ENCODE measurements at regions of chr2 and their contacts with region 1.

Region 1: GRCh38 chr2:120312861-120313694 is 32.9 kb upstream of the INHBB start:
- DNase-seq: peak; percentile 74
- H3K4me3 ChIP-seq: peak overlapping the region; percentile 41 to 45 (median 42)
- H3K27ac ChIP-seq: no peak overlapping the region
- H3K4me1 ChIP-seq: peaks cover 4% of the 10 kb centered on the region
- H3K27me3 ChIP-seq: no peaks in the 10 kb centered on the region
- CTCF ChIP-seq: peak; percentile 79 to 93

Region 2: DNA sequence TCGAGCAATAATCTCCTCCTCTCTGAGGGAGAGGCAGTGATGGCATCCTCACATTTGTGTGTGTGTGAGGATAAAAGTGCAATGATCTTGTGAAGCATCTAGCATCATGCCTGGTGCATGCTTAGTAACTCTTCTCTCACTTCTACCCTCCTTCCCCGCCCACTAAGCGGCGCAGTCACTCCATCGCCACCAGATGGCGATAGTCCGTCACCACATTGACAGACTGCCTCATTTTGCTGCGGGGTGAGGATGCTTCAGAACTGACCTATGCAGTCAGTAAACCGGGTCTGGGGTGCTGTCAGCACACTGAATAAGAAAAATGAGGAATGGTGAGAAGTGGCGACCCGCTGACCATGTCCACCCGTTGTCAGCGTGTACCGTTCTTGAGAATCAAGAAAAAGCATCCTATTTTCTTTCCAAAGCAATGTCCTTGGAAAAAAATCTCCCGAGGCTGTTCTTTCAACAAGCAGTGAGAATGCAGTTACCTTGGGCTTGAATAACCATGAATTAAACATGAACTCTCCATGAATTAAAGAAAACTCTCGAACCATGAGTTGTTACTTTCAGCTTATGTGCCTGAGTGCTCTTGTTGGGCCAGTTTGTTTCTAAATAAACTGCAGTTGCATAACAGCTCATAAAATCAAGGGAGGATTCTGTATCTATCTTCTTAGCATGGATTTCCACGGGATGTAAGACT is 671.4 kb before region 1 on chr2:
- CTCF ChIA-PET with region 1: interaction called, 5 read pairs
- dilution Hi-C with region 1: no loop called
- in situ Hi-C with region 1: no loop called
- intact Hi-C with region 1: loop called (anchors 5 kb)
- DNase-seq: peak; percentile 67
- H3K4me3 ChIP-seq: no peak overlapping the region
- H3K27ac ChIP-seq: no peak overlapping the region
- H3K4me1 ChIP-seq: no peaks in the 10 kb centered on the region
- H3K27me3 ChIP-seq: peaks cover 2% of the 10 kb centered on the region
- CTCF ChIP-seq: peak; percentile 98

Region 3: GRCh38 chr2:120109186-120110061 is 203.7 kb before region 1 on chr2:
- CTCF ChIA-PET with region 1: interaction called, 6 read pairs
- dilution Hi-C with region 1: no loop called
- in situ Hi-C with region 1: no loop called
- intact Hi-C with region 1: loop called (anchors 1 kb)
- DNase-seq: peak; percentile 36
- H3K4me3 ChIP-seq: no peak overlapping the region
- H3K27ac ChIP-seq: peak overlapping the region; percentile 50
- H3K4me1 ChIP-seq: peaks cover 26% of the 10 kb centered on the region
- H3K27me3 ChIP-seq: no peaks in the 10 kb centered on the region
- CTCF ChIP-seq: peak; percentile 48 to 54

Region 4: DNA sequence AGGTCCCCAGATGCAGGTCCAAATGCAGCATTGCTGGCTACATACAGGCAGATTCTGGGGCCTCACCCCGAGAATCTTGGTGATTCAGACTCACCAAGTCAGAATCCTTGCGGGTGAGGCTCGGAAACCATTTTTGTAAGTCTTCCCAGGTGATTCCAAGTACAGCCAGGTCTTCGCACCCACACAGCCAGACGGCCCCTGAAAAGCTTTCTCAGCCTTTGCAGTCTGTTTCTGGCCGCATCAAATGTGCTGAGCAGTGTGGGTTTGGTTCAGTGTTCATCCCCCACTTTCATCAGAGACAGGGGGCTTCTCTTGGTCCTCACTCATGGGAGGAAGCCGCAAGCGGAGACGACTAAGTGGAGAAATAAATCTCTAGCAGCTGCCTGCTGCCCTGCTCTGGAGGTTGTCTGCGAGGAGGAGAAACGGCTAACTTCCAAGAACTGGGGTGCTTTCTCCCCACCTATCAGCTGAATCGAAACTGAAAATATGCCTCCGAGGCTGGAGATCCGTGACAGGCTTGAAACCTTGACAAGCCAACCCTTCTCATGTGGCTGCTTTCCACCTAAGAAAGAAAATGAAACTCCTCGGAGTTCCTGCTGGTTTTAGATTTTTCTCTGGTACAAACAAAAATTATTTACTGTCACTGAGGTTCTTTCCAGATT is 81.0 kb before region 1 on chr2:
- CTCF ChIA-PET with region 1: interaction called, 3 read pairs
- dilution Hi-C with region 1: loop called (anchors 5 kb)
- in situ Hi-C with region 1: no loop called
- intact Hi-C with region 1: loop called (anchors 1 kb)
- DNase-seq: peak; percentile 58
- H3K4me3 ChIP-seq: peak overlapping the region; percentile 54 to 58 (median 57)
- H3K27ac ChIP-seq: peak overlapping the region; percentile 62
- H3K4me1 ChIP-seq: peaks cover 5% of the 10 kb centered on the region
- H3K27me3 ChIP-seq: no peaks in the 10 kb centered on the region
- CTCF ChIP-seq: no peak

Region 5: DNA sequence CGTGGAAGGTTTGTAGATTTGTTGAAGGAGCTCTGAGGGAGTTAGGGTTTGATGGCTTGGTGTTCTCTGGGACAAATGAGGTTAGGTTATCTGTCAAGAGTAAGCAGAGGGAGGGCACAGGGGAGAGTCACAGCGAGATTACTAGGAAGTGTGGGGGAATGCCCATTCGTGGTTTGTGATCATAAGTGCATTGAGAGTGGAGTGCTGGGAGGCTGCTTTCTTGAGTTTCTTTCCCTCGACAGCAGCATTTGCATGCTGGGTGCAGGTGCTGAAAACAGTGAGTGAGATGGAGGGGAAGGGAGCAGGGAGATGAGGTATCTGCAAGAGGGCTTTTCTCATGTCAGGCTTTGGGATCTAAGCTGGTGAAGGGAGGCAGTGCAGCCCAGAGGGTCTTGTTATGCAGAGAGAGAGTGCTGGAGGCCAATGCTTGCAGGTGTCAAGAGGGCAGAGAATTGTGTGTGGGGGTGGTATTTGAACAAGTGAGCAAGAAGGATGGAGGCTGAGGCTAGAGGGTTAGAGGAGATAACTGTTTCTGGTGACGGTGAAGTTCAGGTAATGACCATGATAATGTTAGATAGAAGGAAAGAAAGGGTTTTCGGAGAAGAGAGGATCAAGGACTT is 51.6 kb before region 1 on chr2:
- CTCF ChIA-PET with region 1: interaction called, 4 read pairs
- dilution Hi-C with region 1: loop called (anchors 5 kb)
- in situ Hi-C with region 1: no loop called
- intact Hi-C with region 1: no loop called
- DNase-seq: no peak
- H3K4me3 ChIP-seq: no peak overlapping the region
- H3K27ac ChIP-seq: no peak overlapping the region
- H3K4me1 ChIP-seq: peaks cover 21% of the 10 kb centered on the region
- H3K27me3 ChIP-seq: no peaks in the 10 kb centered on the region
- CTCF ChIP-seq: no peak